ENCODE measurements at regions of chr11 and their contacts with region 1.

Region 1: DNA sequence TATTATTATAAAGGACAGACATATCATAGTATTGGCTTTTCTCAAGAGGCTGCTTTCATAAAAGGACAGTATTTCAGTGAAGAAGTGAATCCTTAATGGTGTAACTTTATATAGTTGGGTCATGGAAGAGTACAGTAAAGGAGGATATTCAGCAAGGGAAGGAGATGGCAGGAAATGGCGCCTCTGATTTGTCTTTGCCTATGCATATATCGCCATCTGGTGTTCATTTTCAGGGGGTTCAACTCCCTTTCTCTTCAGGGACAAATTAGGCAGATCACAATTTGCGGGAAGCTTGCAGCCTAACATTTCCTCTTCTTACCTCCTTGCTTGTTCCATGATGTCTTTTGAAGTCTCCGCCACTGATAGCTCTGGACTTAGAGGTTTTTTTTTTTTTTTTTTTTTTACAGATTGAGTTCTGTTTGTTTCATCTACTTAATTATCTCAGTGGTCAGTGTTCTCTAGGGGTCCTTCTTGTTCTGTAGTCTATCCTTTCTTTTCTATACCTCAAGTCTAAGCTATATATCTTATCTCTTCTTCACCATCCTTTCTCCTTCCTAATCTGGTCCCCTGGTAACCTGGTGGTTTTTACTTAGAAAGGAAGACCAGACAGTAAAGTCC is 21.8 kb upstream of the RRM1 start:
- DNase-seq: peak; percentile 67 to 80
- ATAC-seq: peak; percentile 90 to 97
- H3K4me3 ChIP-seq: no peak overlapping the region
- H3K27ac ChIP-seq: no peak overlapping the region
- H3K4me1 ChIP-seq: no peaks in the 10 kb centered on the region
- CTCF ChIP-seq: peak; percentile 93
- EP300 ChIP-seq: no peak
- POLR2A ChIP-seq: no peak
- RAD21 ChIP-seq: peak; percentile 96 to 98

Region 2: DNA sequence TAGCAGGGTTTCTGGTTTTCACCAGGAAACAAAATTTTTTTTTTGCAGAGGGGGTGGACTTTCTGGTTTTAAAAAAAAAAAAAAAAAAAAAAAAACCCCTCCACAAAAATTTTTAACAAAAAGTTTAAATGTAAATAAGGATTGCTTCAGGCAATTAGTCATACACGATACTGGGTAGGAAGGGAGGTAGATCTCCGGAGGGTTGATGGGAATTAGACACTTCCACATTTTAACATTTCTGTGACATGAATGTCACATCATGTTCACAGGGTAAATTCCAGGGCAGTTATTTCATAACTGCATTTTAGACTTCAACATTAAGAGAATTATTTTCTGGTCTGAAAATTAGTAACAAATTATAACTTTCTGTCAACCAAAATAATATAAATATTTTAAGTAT is 291.4 kb before region 1 on chr11:
- CTCF ChIA-PET with region 1: no interaction called
- POLR2A ChIA-PET with region 1: no interaction called
- DNase-seq: no peak
- ATAC-seq: no peak; a peak in 1 of 6 replicates
- H3K4me3 ChIP-seq: no peak overlapping the region
- H3K27ac ChIP-seq: no peak overlapping the region
- H3K4me1 ChIP-seq: peaks cover 17% of the 10 kb centered on the region
- CTCF ChIP-seq: no peak
- EP300 ChIP-seq: no peak
- POLR2A ChIP-seq: no peak
- RAD21 ChIP-seq: no peak

Region 3: DNA sequence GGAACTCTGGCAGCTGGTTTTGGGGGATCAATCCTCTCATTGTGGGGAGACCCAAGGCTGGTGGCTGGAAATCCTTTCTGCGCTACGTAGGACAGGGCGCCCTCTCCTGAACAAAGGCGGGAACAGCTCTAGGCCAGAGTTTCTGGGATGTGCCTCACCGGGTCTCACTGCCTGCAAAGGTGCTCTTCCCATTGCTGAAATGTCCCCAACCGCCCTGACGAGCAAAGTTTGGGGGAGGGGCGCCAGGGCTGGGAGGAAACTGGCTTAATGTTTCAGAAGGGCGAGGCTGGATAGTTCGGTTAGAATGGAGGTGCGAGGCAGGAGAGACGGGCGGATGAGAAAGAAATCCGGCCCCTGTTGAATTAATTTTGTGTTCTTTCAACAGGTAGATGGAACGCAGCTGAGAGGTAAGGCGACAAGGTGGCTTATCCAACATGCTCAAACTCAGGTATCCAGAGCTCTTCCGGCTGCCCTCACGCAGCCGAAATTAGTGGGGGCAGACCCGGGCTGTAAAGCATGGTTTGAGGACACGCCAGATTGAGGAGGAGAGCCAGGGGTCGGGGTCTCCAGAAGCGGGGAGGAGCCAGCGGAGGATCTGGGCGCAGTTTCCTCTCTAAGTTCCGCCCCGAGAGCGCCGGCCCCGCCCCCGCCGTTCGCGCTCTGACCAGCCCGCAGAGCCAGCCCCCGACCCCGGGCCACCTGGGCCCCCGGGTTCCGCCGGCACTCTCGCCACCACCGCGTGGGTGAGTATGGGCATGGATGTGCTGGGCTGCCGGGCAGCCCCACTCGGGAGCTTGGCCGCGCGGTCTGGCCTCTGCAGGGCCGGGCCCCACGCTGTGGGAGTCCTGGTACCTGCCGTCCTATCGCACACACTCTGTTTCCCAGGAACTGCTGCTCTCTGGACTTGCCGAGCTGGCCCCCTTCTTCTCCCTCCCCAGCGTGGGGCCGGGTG is 264.6 kb before region 1 on chr11 and contains the start of gene PGAP2:
- CTCF ChIA-PET with region 1: interaction called, 25 read pairs
- POLR2A ChIA-PET with region 1: no interaction called
- DNase-seq: peak; percentile 73 to 93
- ATAC-seq: peak; percentile 84 to 89
- H3K4me3 ChIP-seq: peak within 1 kb of the TSS; percentile 79
- H3K27ac ChIP-seq: peak within 1 kb of the TSS; percentile 80 to 90
- H3K4me1 ChIP-seq: 0 out of 3 replicates have a peak, but pooled peaks cover 8% of the 10 kb centered on the region
- CTCF ChIP-seq: peak; percentile 61
- EP300 ChIP-seq: no peak
- POLR2A ChIP-seq: 0 out of 2 replicates have a peak, but pooled peaks have one; percentile 16
- RAD21 ChIP-seq: peak; percentile 54 to 57; a peak in 3 of 5 replicates
- polyA plus RNA-seq, gene PGAP2: 35.2 and 49.2 TPM in 2 replicates

Region 4: DNA sequence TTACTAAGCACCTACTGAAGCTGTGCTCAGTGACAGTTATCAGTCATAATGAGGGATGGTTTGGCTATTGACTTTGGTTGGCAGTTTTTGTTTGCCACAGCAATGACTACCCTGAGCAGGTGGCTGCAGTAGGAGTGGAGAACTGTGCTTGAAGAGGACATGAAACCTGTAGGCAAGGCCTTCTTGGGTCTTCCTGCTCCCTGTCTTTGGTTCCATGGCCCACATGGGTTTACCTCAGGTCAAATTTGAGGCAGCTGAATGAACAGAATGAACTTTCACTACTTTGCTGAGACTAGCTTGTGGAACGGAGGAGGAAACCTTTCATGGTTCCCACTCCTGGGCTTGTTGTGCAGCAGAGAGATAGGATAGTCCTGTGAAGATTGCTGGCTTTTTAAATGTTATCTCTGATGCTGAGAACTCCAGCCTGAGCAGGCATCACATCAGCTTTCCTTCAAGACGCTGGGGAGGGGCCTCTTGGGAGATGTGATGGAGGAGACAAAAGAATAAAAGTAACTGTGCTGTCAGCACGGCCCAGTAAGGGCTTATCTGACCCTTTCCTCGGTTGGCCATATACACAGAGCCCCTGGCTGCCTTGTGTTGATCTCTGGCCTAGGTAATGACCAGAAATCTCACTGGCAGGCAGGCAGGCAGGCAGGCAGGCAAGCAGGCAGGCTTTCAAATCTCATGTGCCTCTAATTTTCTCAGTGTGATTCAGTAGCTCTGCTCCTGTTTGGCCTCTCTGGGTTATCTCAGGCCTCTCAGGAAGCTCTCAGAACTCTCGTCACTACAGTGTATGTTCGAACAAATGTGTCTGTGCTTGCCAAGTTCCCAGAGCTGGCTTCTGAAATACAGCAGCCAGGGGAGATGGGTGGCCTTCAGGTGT is 205.3 kb before region 1 on chr11:
- CTCF ChIA-PET with region 1: interaction called, 919 read pairs
- POLR2A ChIA-PET with region 1: no interaction called
- DNase-seq: no peak
- ATAC-seq: no peak
- H3K4me3 ChIP-seq: no peak overlapping the region
- H3K27ac ChIP-seq: no peak overlapping the region; a peak in 1 of 6 replicates
- H3K4me1 ChIP-seq: peaks cover 15% of the 10 kb centered on the region
- CTCF ChIP-seq: no peak
- EP300 ChIP-seq: no peak
- POLR2A ChIP-seq: no peak
- RAD21 ChIP-seq: no peak

Region 5: GRCh38 chr11:3888876-3889275 is 183.9 kb before region 1 on chr11:
- CTCF ChIA-PET with region 1: interaction called, 10 read pairs
- POLR2A ChIA-PET with region 1: no interaction called
- DNase-seq: no peak
- ATAC-seq: no peak
- H3K4me3 ChIP-seq: no peak overlapping the region
- H3K27ac ChIP-seq: no peak overlapping the region
- H3K4me1 ChIP-seq: peaks cover 9% of the 10 kb centered on the region
- CTCF ChIP-seq: no peak
- EP300 ChIP-seq: no peak
- POLR2A ChIP-seq: no peak
- RAD21 ChIP-seq: no peak

Region 6: GRCh38 chr11:3927133-3927796 is 145.5 kb before region 1 on chr11:
- CTCF ChIA-PET with region 1: interaction called, 22 read pairs
- POLR2A ChIA-PET with region 1: no interaction called
- DNase-seq: no peak
- ATAC-seq: peak in 1 of 2 experiments; percentile 39; a peak in 1 of 6 replicates
- H3K4me3 ChIP-seq: no peak overlapping the region
- H3K27ac ChIP-seq: no peak overlapping the region
- H3K4me1 ChIP-seq: peaks cover 9% of the 10 kb centered on the region; the same call in 2 of the 3 replicates
- CTCF ChIP-seq: 0 out of 3 replicates have a peak, but pooled peaks have one; percentile 9
- EP300 ChIP-seq: no peak
- POLR2A ChIP-seq: no peak
- RAD21 ChIP-seq: no peak; a peak in 1 of 5 replicates

Region 7: DNA sequence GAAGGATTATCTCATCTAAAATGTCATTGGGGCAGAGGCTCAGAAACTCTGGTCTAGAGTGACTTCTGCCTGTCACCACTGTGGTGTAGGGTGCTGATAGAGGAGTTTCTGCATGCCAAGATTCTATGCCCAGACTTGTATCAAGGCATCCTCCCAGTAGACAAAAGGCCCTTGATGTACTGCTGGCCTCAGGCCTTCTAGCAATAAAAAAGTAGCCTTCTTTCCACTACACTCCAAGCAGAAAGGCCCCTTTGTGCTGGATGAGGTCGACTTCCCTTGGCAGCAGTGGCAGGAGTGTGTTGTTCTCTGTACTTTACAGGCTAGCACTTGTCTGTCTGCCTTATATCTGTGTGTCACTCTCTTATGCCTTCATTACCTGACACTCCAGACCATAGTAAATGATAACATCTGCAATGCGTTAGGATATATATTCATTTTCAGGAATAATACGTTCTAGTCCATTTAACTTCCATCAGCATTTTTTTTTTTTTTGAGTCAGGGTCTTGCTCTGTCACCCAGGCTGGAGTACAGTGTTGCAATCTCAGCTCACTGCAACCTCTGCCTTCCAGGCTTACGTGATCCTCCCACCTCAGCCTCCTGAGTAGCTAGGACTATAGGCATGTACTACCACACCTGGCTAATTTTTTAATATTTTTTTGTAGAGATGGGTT is 27.7 kb before region 1 on chr11:
- CTCF ChIA-PET with region 1: interaction called, 26 read pairs
- POLR2A ChIA-PET with region 1: no interaction called
- DNase-seq: no peak
- ATAC-seq: peak; percentile 32 to 42; a peak in 3 of 6 replicates
- H3K4me3 ChIP-seq: no peak overlapping the region
- H3K27ac ChIP-seq: no peak overlapping the region
- H3K4me1 ChIP-seq: peaks cover 8% of the 10 kb centered on the region; the same call in 2 of the 3 replicates
- CTCF ChIP-seq: no peak
- EP300 ChIP-seq: no peak
- POLR2A ChIP-seq: no peak
- RAD21 ChIP-seq: no peak

Region 8: DNA sequence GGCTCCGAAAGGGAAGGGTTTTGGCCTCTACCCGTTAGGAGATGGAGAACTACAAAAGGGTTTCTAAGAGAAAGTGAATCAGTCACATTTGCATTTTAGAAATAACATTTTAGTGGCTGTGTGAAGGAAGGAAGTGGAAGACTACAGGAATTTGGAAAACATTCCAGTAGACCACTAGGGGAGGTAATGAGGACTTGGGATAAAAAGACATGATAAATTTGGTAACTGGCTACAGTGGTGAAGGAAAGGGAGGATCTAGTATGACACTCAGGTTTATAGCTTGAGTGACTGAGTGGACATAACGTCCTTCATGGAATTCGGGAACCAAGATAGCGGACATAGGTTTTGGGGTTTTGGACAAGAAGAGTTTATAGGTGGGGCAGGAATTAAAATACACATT is 14.8 kb after region 1 on chr11:
- CTCF ChIA-PET with region 1: interaction called, 102 read pairs
- POLR2A ChIA-PET with region 1: no interaction called
- DNase-seq: peak in 1 of 2 experiments; percentile 11
- ATAC-seq: peak in 1 of 2 experiments; percentile 55; a peak in 3 of 6 replicates
- H3K4me3 ChIP-seq: no peak overlapping the region
- H3K27ac ChIP-seq: no peak overlapping the region
- H3K4me1 ChIP-seq: no peaks in the 10 kb centered on the region
- CTCF ChIP-seq: no peak
- EP300 ChIP-seq: no peak
- POLR2A ChIP-seq: no peak
- RAD21 ChIP-seq: no peak

Region 9: GRCh38 chr11:4156571-4156970 is 83.8 kb after region 1 on chr11:
- CTCF ChIA-PET with region 1: no interaction called
- POLR2A ChIA-PET with region 1: no interaction called
- DNase-seq: no peak
- ATAC-seq: no peak
- H3K4me3 ChIP-seq: no peak overlapping the region
- H3K27ac ChIP-seq: no peak overlapping the region
- H3K4me1 ChIP-seq: no peaks in the 10 kb centered on the region
- CTCF ChIP-seq: no peak
- EP300 ChIP-seq: no peak
- POLR2A ChIP-seq: no peak
- RAD21 ChIP-seq: no peak